HepG2 (cell line): ENCODE measurements at regions of chr2 and their contacts with region 1.

Region 1: DNA sequence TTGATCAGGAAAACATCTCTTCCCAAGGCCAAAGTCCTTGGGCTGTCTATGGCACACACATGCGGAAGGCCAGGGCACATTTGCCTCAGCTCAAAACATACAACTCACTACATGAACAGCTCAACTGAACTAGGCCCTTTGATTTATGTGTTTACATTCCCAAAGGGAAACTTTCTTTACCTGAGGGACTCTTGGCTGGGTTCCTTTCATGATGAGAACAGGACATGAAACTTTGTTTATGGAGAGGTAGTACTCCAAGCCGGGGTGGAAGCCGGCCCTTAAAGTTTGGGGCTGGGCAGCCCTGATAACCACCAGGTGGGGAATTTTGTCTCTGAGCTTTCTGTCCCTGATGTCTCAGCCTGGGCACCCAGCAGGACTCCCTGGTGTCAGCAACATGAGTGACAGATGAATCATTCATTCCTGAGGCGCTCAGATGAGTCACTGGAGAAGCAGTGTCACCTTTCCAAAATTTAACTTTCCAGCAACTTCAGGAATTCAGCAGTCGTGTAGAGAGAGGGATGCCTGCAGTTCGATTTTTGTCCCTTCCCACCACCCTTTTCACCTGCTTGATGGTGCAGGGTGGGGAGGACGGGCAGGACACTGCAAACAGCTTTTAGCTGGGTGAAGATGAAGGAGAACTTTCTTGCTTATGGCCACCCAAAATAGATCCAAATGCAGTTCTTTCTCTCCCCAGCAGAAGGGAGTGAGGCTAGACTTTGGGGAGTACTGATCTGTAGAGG is 331.5 kb downstream of the DYSF start:
- DNase-seq: peak; percentile 33
- ATAC-seq: peak; percentile 69
- H3K4me3 ChIP-seq: no peak overlapping the region
- H3K27ac ChIP-seq: no peak overlapping the region
- H3K4me1 ChIP-seq: peaks cover 26% of the 10 kb centered on the region
- H3K27me3 ChIP-seq: peaks cover 0 to 4% of the 10 kb centered on the region in 2 experiments; a peak in 2 of 5 replicates
- CTCF ChIP-seq: no peak
- EP300 ChIP-seq: no peak
- POLR2A ChIP-seq: no peak
- RAD21 ChIP-seq: no peak

Region 2: DNA sequence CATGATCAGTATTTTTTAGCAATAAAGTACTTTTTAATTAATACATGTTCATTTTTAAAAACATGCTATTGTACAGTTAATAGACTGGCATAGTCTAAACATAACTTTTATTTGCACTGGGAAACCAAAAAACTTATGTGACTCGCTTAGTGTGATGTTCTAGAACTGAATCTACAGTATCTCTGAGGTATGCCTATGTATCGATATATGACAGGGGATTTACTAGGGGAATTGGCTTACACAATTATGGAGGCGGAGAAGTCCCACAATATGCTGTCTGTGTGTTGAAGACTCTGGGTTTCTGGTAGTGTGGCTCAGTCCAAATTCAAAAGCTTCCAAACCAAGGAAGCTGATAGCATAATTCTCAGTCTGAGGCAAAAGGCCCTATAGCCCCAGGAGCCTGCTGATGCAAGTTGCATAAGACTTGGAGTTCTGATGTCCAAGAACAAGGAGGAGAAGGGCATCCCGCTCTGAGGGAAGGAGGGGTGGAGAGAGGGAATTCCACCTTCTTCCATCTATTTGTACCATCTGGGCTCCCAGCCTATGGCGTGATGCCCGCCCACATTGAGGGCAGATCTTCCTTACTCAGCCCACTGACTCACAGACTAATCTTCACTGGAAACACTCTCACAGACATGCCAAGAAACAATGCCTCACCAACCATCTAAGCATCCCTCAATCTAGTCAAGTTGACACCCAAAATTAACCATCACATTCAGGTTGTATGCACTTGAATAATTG is 425.8 kb before region 1 on chr2:
- CTCF ChIA-PET with region 1: no interaction called
- POLR2A ChIA-PET with region 1: no interaction called
- in situ Hi-C with region 1: no loop called
- intact Hi-C with region 1: loop called (anchors 5 kb)
- DNase-seq: no peak
- ATAC-seq: no peak
- H3K4me3 ChIP-seq: no peak overlapping the region
- H3K27ac ChIP-seq: no peak overlapping the region
- H3K4me1 ChIP-seq: peaks cover 21% of the 10 kb centered on the region
- H3K27me3 ChIP-seq: no peaks in the 10 kb centered on the region
- CTCF ChIP-seq: no peak
- EP300 ChIP-seq: no peak
- POLR2A ChIP-seq: no peak
- RAD21 ChIP-seq: no peak

Region 3: GRCh38 chr2:71671895-71672825 is 112.7 kb before region 1 on chr2:
- CTCF ChIA-PET with region 1: no interaction called
- POLR2A ChIA-PET with region 1: no interaction called
- in situ Hi-C with region 1: loop called (anchors 5 kb)
- intact Hi-C with region 1: no loop called
- DNase-seq: peak; percentile 18
- ATAC-seq: peak; percentile 86
- H3K4me3 ChIP-seq: no peak overlapping the region
- H3K27ac ChIP-seq: no peak overlapping the region
- H3K4me1 ChIP-seq: no peaks in the 10 kb centered on the region
- H3K27me3 ChIP-seq: peaks cover 0 to 2% of the 10 kb centered on the region in 2 experiments; a peak in 1 of 5 replicates
- CTCF ChIP-seq: peak; percentile 70
- EP300 ChIP-seq: no peak
- POLR2A ChIP-seq: no peak
- RAD21 ChIP-seq: peak; percentile 57

Region 4: DNA sequence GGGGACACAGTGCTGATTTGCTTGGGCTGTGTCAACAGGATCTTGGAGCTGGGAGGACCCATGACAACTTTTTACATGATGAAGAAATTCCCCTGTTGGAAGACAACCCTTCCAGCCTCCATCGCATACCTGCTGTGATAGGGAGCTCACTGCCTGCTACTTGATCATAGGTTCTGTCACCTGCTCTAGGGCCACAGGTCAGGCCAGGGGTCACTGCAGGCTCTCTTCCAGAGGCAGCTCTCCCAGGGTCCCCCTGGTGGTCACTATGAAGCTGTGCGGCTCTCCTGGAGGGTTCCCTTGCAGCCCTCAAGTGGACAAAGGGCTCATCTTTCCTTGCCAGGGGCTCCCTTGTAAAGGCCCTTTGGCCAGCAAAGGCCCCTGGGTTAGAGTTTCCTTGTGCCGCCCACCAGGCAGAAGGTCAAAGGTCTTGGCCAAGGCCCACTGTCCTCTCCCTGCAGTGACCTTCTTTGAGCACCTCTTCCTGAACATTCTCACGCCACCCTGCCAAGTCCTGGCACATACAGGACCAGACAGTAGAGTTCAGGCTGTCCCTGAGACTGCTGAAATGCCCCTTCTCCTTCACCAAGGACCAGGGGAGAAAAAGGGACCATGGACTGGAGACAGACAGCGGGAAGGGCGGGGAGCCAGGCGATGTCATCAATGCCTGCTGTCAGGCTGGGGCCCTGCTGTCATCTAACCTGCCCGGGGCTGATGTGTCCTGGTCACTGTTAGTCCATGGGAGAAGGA is 13.5 kb after region 1 on chr2:
- CTCF ChIA-PET with region 1: no interaction called
- POLR2A ChIA-PET with region 1: no interaction called
- in situ Hi-C with region 1: no loop called
- intact Hi-C with region 1: no loop called
- DNase-seq: peak; percentile 61
- ATAC-seq: peak; percentile 92
- H3K4me3 ChIP-seq: no peak overlapping the region
- H3K27ac ChIP-seq: no peak overlapping the region
- H3K4me1 ChIP-seq: peaks cover 5% of the 10 kb centered on the region; the same call in 1 of the 2 replicates
- H3K27me3 ChIP-seq: peaks cover 0 to 31% of the 10 kb centered on the region in 2 experiments; a peak in 4 of 5 replicates
- CTCF ChIP-seq: peak; percentile 88
- EP300 ChIP-seq: no peak
- POLR2A ChIP-seq: no peak
- RAD21 ChIP-seq: peak; percentile 92

Region 5: DNA sequence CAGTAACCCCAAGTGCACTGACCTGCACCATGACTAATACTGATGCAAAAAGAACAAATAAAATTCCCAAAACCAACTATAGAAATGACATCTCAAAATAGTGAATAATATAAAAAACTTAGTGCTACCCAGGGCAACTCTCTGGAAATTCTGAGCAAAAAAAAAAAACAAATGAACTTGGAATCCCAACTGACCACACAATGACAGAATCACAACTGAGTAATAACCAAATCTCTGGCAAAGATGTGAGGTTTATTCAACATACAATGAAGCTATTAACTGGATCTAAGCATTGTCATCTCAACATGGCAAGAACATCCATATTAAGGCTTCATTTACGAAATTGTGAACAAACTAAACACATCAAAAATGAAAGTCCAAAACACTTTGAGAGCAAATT is 1018.2 kb after region 1 on chr2:
- CTCF ChIA-PET with region 1: no interaction called
- POLR2A ChIA-PET with region 1: no interaction called
- in situ Hi-C with region 1: no loop called
- intact Hi-C with region 1: no loop called
- DNase-seq: no peak
- ATAC-seq: no peak
- H3K4me3 ChIP-seq: no peak overlapping the region
- H3K27ac ChIP-seq: no peak overlapping the region
- H3K4me1 ChIP-seq: no peaks in the 10 kb centered on the region
- H3K27me3 ChIP-seq: no peaks in the 10 kb centered on the region
- CTCF ChIP-seq: no peak
- EP300 ChIP-seq: no peak
- POLR2A ChIP-seq: no peak
- RAD21 ChIP-seq: no peak